ENCODE measurements at regions of chr10 and their contacts with region 1.

Region 1: DNA sequence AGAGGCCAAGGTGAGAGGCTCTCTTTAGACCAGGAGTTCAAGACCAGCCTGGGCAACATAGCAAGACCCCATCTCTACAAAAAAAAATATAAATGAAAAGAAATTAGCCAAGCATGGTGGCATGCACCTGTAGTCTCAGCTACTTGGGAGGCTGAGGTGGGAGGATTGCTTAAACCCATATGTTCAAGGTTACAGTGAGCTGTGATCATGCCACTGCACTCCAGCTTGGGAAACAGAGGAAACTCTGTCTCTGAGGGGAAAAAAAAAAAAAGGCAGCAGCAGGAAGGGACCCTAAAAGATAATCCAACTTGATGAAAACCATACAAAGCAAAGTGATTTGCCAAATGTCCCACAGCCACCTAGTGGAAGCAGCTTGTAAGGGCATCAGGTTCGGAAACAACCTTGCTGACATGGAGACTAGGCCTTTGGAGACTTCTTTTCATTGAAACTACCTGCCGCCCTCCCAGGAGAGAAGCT is 15.6 kb upstream of the PBLD start:
- DNase-seq: peak; percentile 27
- H3K4me3 ChIP-seq: no peak overlapping the region
- H3K27ac ChIP-seq: no peak overlapping the region
- H3K4me1 ChIP-seq: no peaks in the 10 kb centered on the region
- H3K27me3 ChIP-seq: no peaks in the 10 kb centered on the region
- CTCF ChIP-seq: peak; percentile 70 to 76

Region 2: DNA sequence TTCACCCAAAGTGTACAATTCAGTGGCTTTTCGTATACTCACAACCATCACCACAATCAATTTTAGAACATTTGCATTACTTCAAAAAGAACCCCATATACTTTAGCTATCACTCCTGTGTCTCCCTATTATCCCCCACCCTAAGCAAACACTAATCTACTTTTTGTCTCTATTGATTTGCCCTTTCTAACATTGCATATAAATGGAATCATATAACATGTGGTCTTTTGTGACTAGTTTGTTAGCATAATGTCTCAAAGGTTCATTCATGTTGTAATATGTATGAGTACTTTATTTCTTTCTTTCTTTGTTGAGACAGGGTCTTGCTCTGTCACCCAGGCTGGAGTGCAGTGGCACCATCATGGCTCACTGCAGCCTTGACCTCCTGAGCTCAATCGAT is 489.3 kb before region 1 on chr10:
- CTCF ChIA-PET with region 1: no interaction called
- dilution Hi-C with region 1: no loop called
- in situ Hi-C with region 1: no loop called
- intact Hi-C with region 1: loop called (anchors 5 kb)
- DNase-seq: no peak
- H3K4me3 ChIP-seq: no peak overlapping the region
- H3K27ac ChIP-seq: no peak overlapping the region
- H3K4me1 ChIP-seq: peaks cover 3% of the 10 kb centered on the region
- H3K27me3 ChIP-seq: no peaks in the 10 kb centered on the region
- CTCF ChIP-seq: no peak

Region 3: DNA sequence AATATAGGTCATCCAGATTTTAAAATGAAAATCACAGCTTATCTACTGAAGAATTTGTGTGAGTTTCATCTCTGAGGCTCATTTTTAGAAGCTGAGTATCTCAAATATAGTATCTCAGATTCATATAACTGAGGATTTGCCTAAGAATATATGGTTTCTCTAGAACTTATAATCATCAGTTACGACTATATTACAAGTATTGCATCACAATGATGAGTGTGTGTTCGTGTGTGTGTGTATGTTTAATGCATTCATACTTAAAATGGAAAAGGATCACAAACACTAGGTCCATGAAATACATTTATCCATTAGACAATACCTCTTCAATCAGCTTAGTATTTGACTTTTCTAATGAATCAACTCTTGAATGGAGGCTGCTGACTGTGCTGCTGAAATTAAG is 37.4 kb after region 1 on chr10:
- CTCF ChIA-PET with region 1: no interaction called
- dilution Hi-C with region 1: no loop called
- in situ Hi-C with region 1: no loop called
- intact Hi-C with region 1: no loop called
- DNase-seq: no peak
- H3K4me3 ChIP-seq: no peak overlapping the region
- H3K27ac ChIP-seq: no peak overlapping the region
- H3K4me1 ChIP-seq: no peaks in the 10 kb centered on the region
- H3K27me3 ChIP-seq: no peaks in the 10 kb centered on the region
- CTCF ChIP-seq: no peak

Region 4: GRCh38 chr10:68492118-68492517 is 143.8 kb after region 1 on chr10:
- CTCF ChIA-PET with region 1: no interaction called
- dilution Hi-C with region 1: no loop called
- in situ Hi-C with region 1: no loop called
- intact Hi-C with region 1: no loop called
- DNase-seq: no peak
- H3K4me3 ChIP-seq: no peak overlapping the region
- H3K27ac ChIP-seq: no peak overlapping the region
- H3K4me1 ChIP-seq: no peaks in the 10 kb centered on the region
- H3K27me3 ChIP-seq: no peaks in the 10 kb centered on the region
- CTCF ChIP-seq: no peak

Measured in mammary epithelial cell (primary cell).